ENCODE measurements at regions of chr20 and their contacts with region 1.

Region 1: DNA sequence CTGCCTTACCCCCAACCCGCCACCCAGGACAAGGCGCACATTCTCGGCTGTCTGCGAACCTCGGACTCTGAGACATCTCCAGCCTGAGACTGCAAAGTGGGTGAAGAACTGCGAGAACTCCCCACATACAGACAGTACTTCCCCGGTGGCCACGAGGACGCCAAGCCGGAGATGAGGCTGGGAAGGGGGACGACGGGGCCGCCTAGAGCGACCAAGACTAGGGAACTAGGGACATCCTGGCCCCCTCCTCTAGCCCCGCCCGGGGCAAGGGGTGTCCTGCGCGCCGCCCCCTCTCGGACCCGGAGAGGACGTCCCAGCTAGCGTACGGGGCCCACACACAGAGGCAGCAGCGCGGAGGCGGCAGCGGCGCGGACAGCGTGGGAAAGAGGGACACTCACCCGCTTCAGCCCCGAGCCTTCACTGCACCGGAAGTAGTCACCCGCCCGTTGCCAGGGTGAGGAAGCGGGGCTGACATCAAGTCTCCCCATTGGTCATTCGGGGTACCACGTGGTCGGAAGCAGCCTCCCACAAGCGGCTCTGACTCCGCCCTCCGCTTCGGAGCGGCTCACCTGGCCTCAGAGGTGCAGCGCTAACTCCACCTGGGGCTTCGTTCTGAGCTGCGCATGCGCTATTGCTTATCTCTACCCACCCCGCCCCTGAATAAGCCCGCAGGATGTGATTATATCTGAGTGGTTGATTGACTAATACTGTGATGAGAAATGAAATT is at the start of gene TASP1:
- DNase-seq: peak; percentile 98
- ATAC-seq: peak; percentile 100
- H3K4me3 ChIP-seq: peak within 1 kb of the TSS; percentile 82 to 99 (median 93)
- H3K27ac ChIP-seq: peak within 1 kb of the TSS; percentile 55
- H3K4me1 ChIP-seq: peaks cover 24% of the 10 kb centered on the region
- H3K27me3 ChIP-seq: no peaks in the 10 kb centered on the region; a peak in 2 of 5 replicates
- CTCF ChIP-seq: peak; percentile 6; the same call in 1 of the 2 replicates
- EP300 ChIP-seq: no peak
- POLR2A ChIP-seq: peak; percentile 83 to 94
- RAD21 ChIP-seq: 0 out of 2 replicates have a peak, but pooled peaks have one; percentile 18
- total RNA-seq, gene TASP1: 25.2 and 29.1 TPM in 2 replicates

Region 2: GRCh38 chr20:13325033-13325432 is 313.6 kb before region 1 on chr20:
- CTCF ChIA-PET with region 1: no interaction called
- POLR2A ChIA-PET with region 1: no interaction called
- in situ Hi-C with region 1: no loop called
- intact Hi-C with region 1: loop called (anchors 5 kb)
- DNase-seq: peak; percentile 74
- ATAC-seq: peak; percentile 99
- H3K4me3 ChIP-seq: no peak overlapping the region
- H3K27ac ChIP-seq: no peak overlapping the region
- H3K4me1 ChIP-seq: peaks cover 29% of the 10 kb centered on the region
- H3K27me3 ChIP-seq: no peaks in the 10 kb centered on the region
- CTCF ChIP-seq: peak; percentile 98
- EP300 ChIP-seq: no peak
- POLR2A ChIP-seq: no peak
- RAD21 ChIP-seq: peak; percentile 99

Region 3: GRCh38 chr20:13610184-13610583 is 28.5 kb before region 1 on chr20:
- CTCF ChIA-PET with region 1: no interaction called
- POLR2A ChIA-PET with region 1: no interaction called
- in situ Hi-C with region 1: no loop called
- intact Hi-C with region 1: loop called (anchors 1 kb)
- DNase-seq: peak; percentile 41
- ATAC-seq: peak; percentile 94
- H3K4me3 ChIP-seq: no peak overlapping the region
- H3K27ac ChIP-seq: no peak overlapping the region
- H3K4me1 ChIP-seq: no peaks in the 10 kb centered on the region
- H3K27me3 ChIP-seq: no peaks in the 10 kb centered on the region
- CTCF ChIP-seq: peak; percentile 64
- EP300 ChIP-seq: no peak
- POLR2A ChIP-seq: no peak
- RAD21 ChIP-seq: 0 out of 2 replicates have a peak, but pooled peaks have one; percentile 14

Region 4: DNA sequence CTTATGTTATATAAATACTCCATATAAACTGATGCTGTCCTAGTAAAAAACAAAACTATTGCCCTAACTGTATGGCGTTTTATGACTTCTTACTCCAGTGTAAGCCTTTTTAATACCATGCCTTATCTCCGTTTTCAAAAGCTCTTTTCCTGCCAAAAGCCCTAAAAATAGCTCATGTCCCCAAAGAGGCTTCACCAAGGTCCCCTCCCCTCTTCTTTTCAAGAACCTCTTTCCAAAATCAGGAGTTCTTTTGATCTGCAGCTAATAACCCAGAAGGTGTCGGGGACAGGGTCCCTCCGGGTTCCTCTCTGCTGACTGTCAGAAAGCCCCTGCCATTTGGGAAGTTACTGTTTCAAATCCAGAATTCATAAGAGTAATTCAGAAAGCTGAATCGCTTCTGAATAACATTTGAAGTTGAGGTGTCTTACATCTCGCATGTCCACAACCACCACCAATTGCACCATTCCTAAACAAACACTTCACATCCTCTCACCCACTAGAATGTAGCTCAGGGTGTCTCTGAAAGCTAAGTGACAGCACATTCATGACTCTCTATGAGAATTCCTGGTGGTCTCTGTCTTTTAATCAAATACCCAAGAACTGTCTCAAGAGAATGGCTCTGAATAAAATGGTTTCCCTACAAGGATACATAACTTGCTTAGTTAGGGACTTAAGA is 13.2 kb before region 1 on chr20:
- CTCF ChIA-PET with region 1: no interaction called
- POLR2A ChIA-PET with region 1: no interaction called
- in situ Hi-C with region 1: no loop called
- intact Hi-C with region 1: no loop called
- DNase-seq: no peak
- ATAC-seq: no peak
- H3K4me3 ChIP-seq: no peak overlapping the region
- H3K27ac ChIP-seq: no peak overlapping the region
- H3K4me1 ChIP-seq: no peaks in the 10 kb centered on the region
- H3K27me3 ChIP-seq: no peaks in the 10 kb centered on the region
- CTCF ChIP-seq: no peak
- EP300 ChIP-seq: no peak
- POLR2A ChIP-seq: no peak
- RAD21 ChIP-seq: no peak

Region 5: GRCh38 chr20:13690943-13691342 is 52.3 kb after region 1 on chr20:
- CTCF ChIA-PET with region 1: no interaction called
- POLR2A ChIA-PET with region 1: no interaction called
- in situ Hi-C with region 1: no loop called
- intact Hi-C with region 1: loop called (anchors 5 kb)
- DNase-seq: no peak
- ATAC-seq: no peak
- H3K4me3 ChIP-seq: no peak overlapping the region
- H3K27ac ChIP-seq: no peak overlapping the region
- H3K4me1 ChIP-seq: peaks cover 42% of the 10 kb centered on the region
- H3K27me3 ChIP-seq: no peaks in the 10 kb centered on the region; a peak in 1 of 5 replicates
- CTCF ChIP-seq: no peak
- EP300 ChIP-seq: no peak
- POLR2A ChIP-seq: no peak
- RAD21 ChIP-seq: no peak

Region 6: DNA sequence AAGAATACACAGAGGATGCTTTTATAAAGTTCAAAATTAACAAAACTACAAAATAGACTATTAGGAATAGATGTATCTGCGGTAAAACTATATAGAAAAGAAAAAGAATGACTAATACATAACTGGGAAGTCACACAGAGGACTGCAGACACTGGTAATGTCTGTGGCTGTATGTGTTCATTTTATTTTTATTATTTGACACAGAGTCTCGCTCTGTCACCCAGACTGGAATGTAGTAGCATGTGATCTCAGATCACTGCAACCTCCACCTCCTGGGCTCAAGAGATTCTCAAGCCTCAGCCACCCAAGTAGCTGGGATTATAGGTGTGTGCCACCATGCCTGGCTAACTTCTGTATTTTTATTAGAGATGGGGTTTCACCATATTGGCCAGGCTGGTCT is 107.1 kb after region 1 on chr20:
- CTCF ChIA-PET with region 1: no interaction called
- POLR2A ChIA-PET with region 1: no interaction called
- in situ Hi-C with region 1: no loop called
- intact Hi-C with region 1: no loop called
- DNase-seq: no peak
- ATAC-seq: no peak
- H3K4me3 ChIP-seq: no peak overlapping the region
- H3K27ac ChIP-seq: no peak overlapping the region
- H3K4me1 ChIP-seq: no peaks in the 10 kb centered on the region
- H3K27me3 ChIP-seq: no peaks in the 10 kb centered on the region
- CTCF ChIP-seq: no peak
- EP300 ChIP-seq: no peak
- POLR2A ChIP-seq: no peak
- RAD21 ChIP-seq: no peak

Region 7: DNA sequence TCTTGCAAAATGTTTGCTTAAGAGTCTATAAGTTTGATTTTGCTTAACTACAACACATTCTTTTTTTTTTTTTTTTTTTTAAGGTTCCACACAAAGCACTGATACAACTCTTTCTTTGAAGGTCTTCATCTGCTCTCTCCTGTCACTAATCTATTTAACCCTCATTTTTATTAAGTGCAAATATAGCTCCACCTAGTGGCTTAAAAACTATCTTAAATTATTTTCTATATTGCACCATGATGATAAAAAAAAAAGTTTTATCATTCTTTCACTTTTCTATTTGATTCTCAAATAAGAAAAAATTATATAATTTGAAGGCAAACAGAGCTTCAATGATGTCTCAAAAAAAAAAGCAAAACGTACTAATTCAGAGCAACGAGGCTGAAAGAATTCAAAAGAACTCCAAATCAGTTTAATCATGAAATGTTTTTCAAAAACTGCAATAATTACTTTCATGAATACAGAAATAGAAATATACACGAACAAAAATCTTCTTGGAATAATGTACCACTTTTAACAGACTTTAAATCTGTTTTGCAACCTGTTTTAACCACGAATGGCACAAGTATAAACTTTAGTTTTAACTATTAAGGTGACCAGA is 133.3 kb after region 1 on chr20:
- CTCF ChIA-PET with region 1: no interaction called
- POLR2A ChIA-PET with region 1: no interaction called
- in situ Hi-C with region 1: no loop called
- intact Hi-C with region 1: loop called (anchors 5 kb)
- DNase-seq: peak; percentile 28
- ATAC-seq: peak; percentile 46; the same call in 1 of the 3 replicates
- H3K4me3 ChIP-seq: no peak overlapping the region
- H3K27ac ChIP-seq: no peak overlapping the region
- H3K4me1 ChIP-seq: no peaks in the 10 kb centered on the region
- H3K27me3 ChIP-seq: no peaks in the 10 kb centered on the region
- CTCF ChIP-seq: peak; percentile 41
- EP300 ChIP-seq: no peak
- POLR2A ChIP-seq: no peak
- RAD21 ChIP-seq: no peak

Region 8: DNA sequence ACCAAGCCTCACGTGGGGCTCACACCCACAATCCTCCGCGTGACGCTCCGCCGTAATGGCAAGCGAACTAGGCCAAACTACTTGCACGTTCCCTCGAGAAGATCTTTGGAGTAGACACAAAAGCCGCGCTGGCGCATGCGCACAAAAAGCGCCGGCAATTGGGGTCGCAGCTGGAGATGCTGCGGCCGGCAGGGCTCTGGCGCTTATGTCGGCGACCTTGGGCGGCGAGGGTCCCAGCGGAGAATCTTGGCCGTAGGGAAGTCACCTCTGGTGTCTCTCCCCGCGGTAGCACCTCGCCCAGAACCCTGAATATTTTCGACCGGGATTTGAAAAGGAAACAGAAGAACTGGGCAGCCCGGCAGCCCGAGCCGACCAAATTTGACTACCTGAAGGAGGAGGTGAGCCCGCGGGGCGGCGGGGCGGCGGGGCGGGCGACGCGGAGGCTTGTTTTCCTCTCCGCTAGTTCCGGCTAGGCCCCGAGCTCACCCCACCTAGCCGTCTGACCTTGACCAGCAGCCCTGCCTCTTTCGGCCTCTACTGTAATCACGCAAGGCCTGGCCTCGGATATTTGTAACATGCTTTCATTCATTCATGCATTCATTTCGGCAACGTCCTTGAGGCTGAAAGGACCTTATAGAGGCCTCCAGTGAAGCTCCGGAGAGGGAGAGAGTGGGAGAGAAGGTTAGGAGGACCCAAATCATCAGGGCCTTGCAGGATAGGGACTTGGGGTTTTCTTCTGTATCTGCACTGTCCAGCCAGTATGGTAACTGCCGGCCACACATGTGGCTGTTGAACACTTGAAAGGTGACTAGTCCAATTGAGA is 146.4 kb after region 1 on chr20 and contains the starts of genes ESF1 and NDUFAF5:
- CTCF ChIA-PET with region 1: no interaction called
- POLR2A ChIA-PET with region 1: no interaction called
- in situ Hi-C with region 1: no loop called
- intact Hi-C with region 1: loop called (anchors 2 kb)
- DNase-seq: peak; percentile 99
- ATAC-seq: peak; percentile 95
- H3K4me3 ChIP-seq: peak within 1 kb of the TSS; percentile 84 to 90 (median 86)
- H3K27ac ChIP-seq: peak within 1 kb of the TSS; percentile 93
- H3K4me1 ChIP-seq: peaks cover 66% of the 10 kb centered on the region
- H3K27me3 ChIP-seq: no peaks in the 10 kb centered on the region; a peak in 1 of 5 replicates
- CTCF ChIP-seq: peak; percentile 42
- EP300 ChIP-seq: peak; percentile 69 to 76; a peak in 2 of 4 replicates
- POLR2A ChIP-seq: peak; percentile 40 to 87; a peak in 3 of 4 replicates
- RAD21 ChIP-seq: peak; percentile 24
- total RNA-seq, gene ESF1: 66.9 and 95.1 TPM in 2 replicates
- total RNA-seq, gene NDUFAF5: 66.7 and 86.0 TPM in 2 replicates

Measured in HepG2 (cell line).